Uterus (tissue), 4 donors: ENCODE measurements at regions of chr17 and their contacts with region 1.

Region 1: DNA sequence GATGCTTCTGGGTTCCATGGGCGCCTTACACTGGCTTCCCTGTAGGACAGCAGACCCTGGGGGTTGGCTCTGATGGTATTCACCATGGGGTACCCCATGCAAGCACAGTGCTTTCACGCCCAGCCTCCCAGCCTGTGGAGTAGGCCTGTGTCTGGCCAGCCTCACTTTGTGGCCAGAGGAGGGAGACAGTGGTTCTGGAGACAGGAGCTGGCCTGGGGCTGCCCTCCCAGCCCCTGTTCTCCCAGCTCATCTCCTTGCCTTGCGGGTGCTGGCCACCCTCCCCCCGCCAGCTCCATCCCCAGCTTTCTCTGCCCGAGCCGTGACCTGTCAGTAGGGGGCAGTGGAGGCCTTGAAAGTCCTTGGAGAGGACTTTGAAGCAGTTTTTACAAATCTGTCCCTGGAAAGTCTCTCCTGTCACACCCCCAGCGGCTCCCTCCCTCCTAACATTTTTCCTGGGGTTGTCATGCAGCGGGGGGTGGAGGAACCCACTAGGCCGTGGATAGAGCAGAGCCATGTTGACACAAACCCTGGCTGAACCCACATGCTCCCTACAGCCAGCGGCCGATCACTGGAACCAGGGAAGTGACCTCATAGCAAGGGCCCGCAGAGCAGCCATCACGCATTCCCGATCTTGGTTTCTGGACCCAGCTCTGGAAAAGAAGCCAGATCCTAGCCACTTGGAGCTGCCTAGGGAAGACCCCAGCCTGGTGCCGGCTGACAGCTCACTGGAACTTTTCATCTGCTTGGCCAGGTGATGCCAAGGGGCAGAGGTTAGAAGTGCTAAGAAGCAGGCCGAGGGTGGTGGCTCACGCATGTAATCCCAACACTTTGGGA is 289.4 kb downstream of the SEC14L1 start:
- DNase-seq: peak; percentile 98
- H3K4me3 ChIP-seq: no peak overlapping the region
- H3K27ac ChIP-seq: peak overlapping the region; percentile 92 to 97
- H3K4me1 ChIP-seq: peaks cover 52 to 67% of the 10 kb centered on the region in 2 donors
- H3K27me3 ChIP-seq: no peaks in the 10 kb centered on the region
- CTCF ChIP-seq: peak; percentile 83 to 94 (median 91)
- POLR2A ChIP-seq: peak in 1 of 2 donors; percentile 27

Region 2: DNA sequence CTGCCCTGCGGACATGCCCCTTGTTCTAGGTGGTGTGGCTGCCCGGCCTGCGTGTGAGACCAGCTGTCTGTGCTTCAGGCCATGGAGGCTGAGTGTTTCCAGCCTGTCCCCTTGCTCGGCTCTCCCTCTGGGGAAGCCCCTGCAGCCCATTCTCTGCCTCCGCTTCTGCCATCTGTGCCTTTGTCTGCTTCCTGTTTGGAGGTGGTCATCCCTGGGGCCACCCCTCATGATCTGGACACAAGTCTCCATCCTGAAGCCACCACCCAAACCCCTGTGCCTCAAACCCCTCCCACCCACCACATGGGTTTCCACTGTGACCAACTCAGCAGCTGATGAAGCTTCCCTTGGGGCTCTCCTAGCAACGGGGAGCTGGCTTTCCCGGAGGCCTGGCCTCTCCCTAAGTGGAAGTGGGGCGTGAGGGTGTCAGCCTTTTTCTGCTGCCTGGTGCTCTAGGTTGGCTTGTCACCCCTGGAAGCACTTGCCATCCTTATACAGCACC is 104.5 kb before region 1 on chr17:
- intact Hi-C with region 1: loop called (anchors 5 kb)
- DNase-seq: no peak
- H3K4me3 ChIP-seq: no peak overlapping the region
- H3K27ac ChIP-seq: peak overlapping the region; percentile 93 to 98
- H3K4me1 ChIP-seq: peaks cover 19 to 31% of the 10 kb centered on the region in 2 donors
- H3K27me3 ChIP-seq: no peaks in the 10 kb centered on the region
- CTCF ChIP-seq: no peak
- POLR2A ChIP-seq: no peak

Region 3: GRCh38 chr17:77494664-77495435 is 64.7 kb after region 1 on chr17:
- intact Hi-C with region 1: loop called (anchors 5 kb)
- DNase-seq: peak; percentile 81 to 84
- H3K4me3 ChIP-seq: no peak overlapping the region
- H3K27ac ChIP-seq: peak overlapping the region; percentile 67 to 68
- H3K4me1 ChIP-seq: peaks cover under 1 to 10% of the 10 kb centered on the region in 2 donors
- H3K27me3 ChIP-seq: no peaks in the 10 kb centered on the region
- CTCF ChIP-seq: peak; percentile 96 to 99 (median 98)
- POLR2A ChIP-seq: no peak